Colonic mucosa (tissue), 4 donors: ENCODE measurements at regions of chr9 and their contacts with region 1.

Region 1: DNA sequence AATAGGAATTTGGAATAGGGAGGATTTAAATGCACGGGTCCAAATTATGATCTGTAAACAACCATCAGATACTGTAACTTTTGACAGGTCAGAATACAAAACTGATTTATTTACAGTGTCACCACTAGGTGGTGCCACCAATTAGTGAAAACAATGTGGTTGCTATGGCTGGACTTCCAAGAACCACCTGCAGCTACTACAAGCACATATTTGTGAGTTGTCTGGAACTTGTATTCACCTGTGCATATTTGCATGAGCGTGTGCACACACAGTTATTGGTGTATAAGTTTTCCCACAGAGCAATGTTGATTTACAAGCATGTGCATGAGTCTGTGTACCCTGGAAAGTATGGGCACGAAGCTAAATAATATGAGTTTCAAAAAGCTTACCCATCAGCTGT is 3.0 kb upstream of the HRCT1 start:
- DNase-seq: peak; percentile 66
- H3K4me3 ChIP-seq: no peak overlapping the region
- H3K27ac ChIP-seq: no peak overlapping the region
- H3K4me1 ChIP-seq: peaks cover 25% of the 10 kb centered on the region
- H3K27me3 ChIP-seq: no peaks in the 10 kb centered on the region
- CTCF ChIP-seq: peak; percentile 70

Region 2: DNA sequence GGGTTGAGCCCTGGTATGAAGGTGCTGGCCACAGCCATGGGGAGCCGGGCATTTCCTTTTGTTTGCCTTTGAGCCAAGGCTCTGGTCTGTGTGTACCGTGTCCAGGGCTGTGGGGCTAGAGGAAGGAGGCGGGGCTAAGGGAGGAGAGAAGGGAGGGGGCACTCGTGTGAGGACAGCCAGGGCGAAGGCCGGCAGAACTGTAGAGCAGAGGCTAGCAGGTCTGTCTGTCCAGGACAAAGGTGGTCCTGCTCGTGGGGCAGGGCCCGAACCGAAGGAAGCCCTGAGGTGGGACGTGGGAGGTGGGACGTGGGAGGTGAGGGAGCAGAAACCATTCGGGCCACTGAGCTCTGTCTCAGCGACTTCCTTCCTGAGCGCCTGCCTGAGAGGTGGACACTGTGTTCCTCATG is 339.3 kb before region 1 on chr9:
- intact Hi-C with region 1: no loop called
- DNase-seq: no peak
- H3K4me3 ChIP-seq: no peak overlapping the region
- H3K27ac ChIP-seq: no peak overlapping the region
- H3K4me1 ChIP-seq: no peaks in the 10 kb centered on the region
- H3K27me3 ChIP-seq: no peaks in the 10 kb centered on the region
- CTCF ChIP-seq: no peak

Region 3: DNA sequence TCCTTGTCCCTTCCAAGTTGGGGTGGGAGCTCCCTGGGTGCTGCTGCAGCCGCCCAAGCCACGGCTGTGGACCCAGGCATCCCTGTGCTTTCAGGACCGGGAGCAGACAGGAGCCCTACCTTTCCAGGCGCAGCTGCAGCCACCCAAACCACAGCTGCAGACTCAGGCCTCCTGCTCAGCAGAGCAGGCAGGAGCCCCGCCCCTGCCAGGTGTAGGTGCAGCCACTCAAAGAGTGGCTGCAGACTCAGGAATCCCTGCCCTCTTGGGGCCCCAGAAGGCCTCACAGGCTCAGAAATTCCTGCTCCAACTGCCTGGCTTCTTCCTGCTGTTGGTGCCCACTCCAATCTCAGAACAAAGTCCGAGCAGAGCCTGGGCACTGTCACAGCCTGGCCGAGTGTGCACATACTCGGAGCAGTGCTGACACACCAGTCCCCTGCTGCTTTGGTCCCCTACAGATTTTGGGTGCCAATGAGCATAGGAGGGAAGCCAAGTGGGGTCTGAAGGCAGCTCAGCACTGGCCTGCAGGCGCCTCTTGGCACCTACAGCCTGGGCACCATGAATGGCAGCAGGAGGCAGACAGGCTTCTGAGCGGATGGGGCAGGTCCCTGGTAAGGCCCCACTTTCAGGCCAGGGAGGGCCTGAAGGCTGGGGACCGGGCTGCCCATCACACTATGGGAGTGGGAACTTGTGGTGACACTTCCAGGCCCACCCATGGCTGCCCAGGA is 304.0 kb before region 1 on chr9:
- intact Hi-C with region 1: no loop called
- DNase-seq: no peak
- H3K4me3 ChIP-seq: no peak overlapping the region
- H3K27ac ChIP-seq: no peak overlapping the region
- H3K4me1 ChIP-seq: peaks cover 7% of the 10 kb centered on the region
- H3K27me3 ChIP-seq: no peaks in the 10 kb centered on the region
- CTCF ChIP-seq: no peak

Region 4: GRCh38 chr9:35945341-35946018 is 42.4 kb after region 1 on chr9:
- intact Hi-C with region 1: loop called (anchors 2 kb)
- DNase-seq: peak; percentile 91
- H3K4me3 ChIP-seq: no peak overlapping the region
- H3K27ac ChIP-seq: peak overlapping the region; percentile 51
- H3K4me1 ChIP-seq: peaks cover 14% of the 10 kb centered on the region
- H3K27me3 ChIP-seq: no peaks in the 10 kb centered on the region
- CTCF ChIP-seq: peak; percentile 78

Region 5: DNA sequence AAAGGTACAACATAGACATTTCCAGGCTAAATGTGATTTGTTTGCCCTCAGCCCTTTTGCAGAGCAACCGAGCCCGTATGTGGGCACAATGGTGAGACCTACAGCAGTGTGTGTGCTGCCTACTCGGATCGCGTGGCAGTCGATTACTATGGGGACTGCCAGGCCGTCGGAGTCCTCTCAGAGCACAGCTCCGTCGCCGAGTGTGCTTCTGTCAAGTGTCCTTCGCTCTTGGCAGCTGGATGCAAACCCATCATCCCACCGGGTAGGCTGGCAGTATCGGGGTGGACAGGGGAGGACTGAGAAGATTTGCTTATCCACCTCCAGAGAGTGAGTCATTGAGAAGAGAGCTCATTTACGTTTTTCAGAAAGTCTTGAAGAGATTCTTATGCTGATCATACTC is 215.7 kb after region 1 on chr9:
- intact Hi-C with region 1: no loop called
- DNase-seq: no peak
- H3K4me3 ChIP-seq: no peak overlapping the region
- H3K27ac ChIP-seq: no peak overlapping the region
- H3K4me1 ChIP-seq: no peaks in the 10 kb centered on the region
- H3K27me3 ChIP-seq: no peaks in the 10 kb centered on the region
- CTCF ChIP-seq: no peak